Heart right ventricle (tissue), 16 donors: ENCODE measurements at regions of chr20 and their contacts with region 1.

Region 1: GRCh38 chr20:33992923-33993575 is 662 bp upstream of the RALY start:
- DNase-seq: peak; percentile 99 to 100
- ATAC-seq: peak; percentile 91 to 97 (median 96)
- H3K4me3 ChIP-seq: peak overlapping the region; percentile 77 to 98 (median 86)
- H3K27ac ChIP-seq: peak overlapping the region; percentile 95 to 99 (median 98)
- H3K4me1 ChIP-seq: peaks cover 14 to 52% (median 42%) of the 10 kb centered on the region in 9 donors
- H3K27me3 ChIP-seq: no peaks in the 10 kb centered on the region
- CTCF ChIP-seq: no peak

Region 2: GRCh38 chr20:33647603-33648395 is 345.2 kb before region 1 on chr20:
- intact Hi-C with region 1: no loop called
- DNase-seq: no peak
- ATAC-seq: peak; percentile 9 to 66 (median 42)
- H3K4me3 ChIP-seq: no peak overlapping the region
- H3K27ac ChIP-seq: peak overlapping the region in 2 of 10 donors; percentile 12 to 16
- H3K4me1 ChIP-seq: peaks cover 0 to 36% (median 31%) of the 10 kb centered on the region in 9 donors
- H3K27me3 ChIP-seq: no peaks in the 10 kb centered on the region
- CTCF ChIP-seq: no peak

Region 3: DNA sequence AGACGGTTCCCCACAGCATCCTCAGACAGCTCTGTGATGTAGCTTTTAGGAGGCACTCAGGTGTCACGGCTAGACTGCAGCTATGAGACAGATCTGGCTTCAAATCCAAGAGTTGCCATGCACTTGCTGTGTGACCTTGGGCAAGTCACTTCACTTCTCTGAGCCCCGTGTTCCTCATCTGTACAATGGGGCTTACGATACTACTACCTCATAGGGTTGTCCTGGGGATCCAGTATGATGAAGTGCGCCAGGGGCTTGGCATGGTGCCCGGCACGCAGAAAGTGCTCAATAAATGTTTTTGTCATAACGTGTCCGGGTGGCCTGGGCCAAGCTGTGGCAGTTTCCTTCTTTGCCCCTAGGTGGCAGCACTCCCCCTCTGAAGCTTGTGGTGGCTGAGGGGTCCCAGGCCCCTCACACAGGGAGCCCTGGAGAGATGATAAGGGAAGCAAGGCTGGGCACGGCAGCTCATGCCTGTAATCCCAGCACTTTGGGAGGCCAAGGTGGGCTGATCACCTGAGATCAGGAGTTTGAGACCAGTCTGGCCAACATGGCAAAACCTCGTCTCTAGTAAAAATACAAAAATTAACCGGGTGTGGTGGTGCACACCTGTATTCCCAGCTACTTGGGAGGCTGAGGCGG is 201.0 kb before region 1 on chr20:
- intact Hi-C with region 1: loop called in 1 of 10 experiments (anchors 5 kb)
- DNase-seq: peak; percentile 40 to 43
- ATAC-seq: peak in 4 of 8 donors; percentile 25 to 48 (median 34)
- H3K4me3 ChIP-seq: no peak overlapping the region
- H3K27ac ChIP-seq: peak overlapping the region in 6 of 10 donors; percentile 31 to 76 (median 59)
- H3K4me1 ChIP-seq: peaks cover 10 to 57% (median 43%) of the 10 kb centered on the region in 9 donors
- H3K27me3 ChIP-seq: no peaks in the 10 kb centered on the region
- CTCF ChIP-seq: peak; percentile 59 to 85 (median 80)

Region 4: GRCh38 chr20:33875055-33875454 is 118.0 kb before region 1 on chr20:
- intact Hi-C with region 1: no loop called
- DNase-seq: no peak
- ATAC-seq: no peak
- H3K4me3 ChIP-seq: no peak overlapping the region
- H3K27ac ChIP-seq: no peak overlapping the region
- H3K4me1 ChIP-seq: no peaks in the 10 kb centered on the region
- H3K27me3 ChIP-seq: no peaks in the 10 kb centered on the region
- CTCF ChIP-seq: no peak

Region 5: GRCh38 chr20:34037121-34037520 is 44.1 kb after region 1 on chr20:
- intact Hi-C with region 1: loop called in 4 of 10 experiments (anchors 2 to 5 kb)
- DNase-seq: no peak
- ATAC-seq: peak in 7 of 8 donors; percentile 22 to 55 (median 46)
- H3K4me3 ChIP-seq: no peak overlapping the region
- H3K27ac ChIP-seq: peak overlapping the region in 1 of 10 donors; percentile 31
- H3K4me1 ChIP-seq: peaks cover 30 to 72% (median 65%) of the 10 kb centered on the region in 9 donors
- H3K27me3 ChIP-seq: no peaks in the 10 kb centered on the region
- CTCF ChIP-seq: no peak

Region 6: DNA sequence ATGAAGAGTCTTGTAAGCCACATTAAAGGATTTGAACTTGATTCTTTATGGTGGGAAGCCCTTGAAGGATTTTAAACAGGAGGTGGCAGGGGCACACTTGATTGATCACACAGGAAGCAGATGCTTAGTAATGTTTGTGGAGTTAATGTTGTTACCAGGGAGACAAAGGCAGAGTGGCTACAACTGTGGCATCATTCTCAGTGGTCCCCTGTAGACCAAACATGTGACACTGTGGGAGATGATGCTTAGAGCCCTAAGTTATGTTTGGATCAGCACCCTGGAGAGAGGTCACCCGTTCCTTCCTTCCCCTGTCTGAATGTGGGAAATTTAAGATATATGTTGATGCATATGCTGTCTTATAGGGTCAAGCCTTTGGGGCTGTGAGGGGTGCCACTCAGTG is 65.8 kb after region 1 on chr20:
- intact Hi-C with region 1: loop called in 3 of 10 experiments (anchors 5 to 10 kb)
- DNase-seq: no peak
- ATAC-seq: peak in 1 of 8 donors; percentile 22
- H3K4me3 ChIP-seq: no peak overlapping the region
- H3K27ac ChIP-seq: no peak overlapping the region
- H3K4me1 ChIP-seq: peaks cover 6 to 65% (median 22%) of the 10 kb centered on the region in 9 donors
- H3K27me3 ChIP-seq: no peaks in the 10 kb centered on the region
- CTCF ChIP-seq: no peak

Region 7: DNA sequence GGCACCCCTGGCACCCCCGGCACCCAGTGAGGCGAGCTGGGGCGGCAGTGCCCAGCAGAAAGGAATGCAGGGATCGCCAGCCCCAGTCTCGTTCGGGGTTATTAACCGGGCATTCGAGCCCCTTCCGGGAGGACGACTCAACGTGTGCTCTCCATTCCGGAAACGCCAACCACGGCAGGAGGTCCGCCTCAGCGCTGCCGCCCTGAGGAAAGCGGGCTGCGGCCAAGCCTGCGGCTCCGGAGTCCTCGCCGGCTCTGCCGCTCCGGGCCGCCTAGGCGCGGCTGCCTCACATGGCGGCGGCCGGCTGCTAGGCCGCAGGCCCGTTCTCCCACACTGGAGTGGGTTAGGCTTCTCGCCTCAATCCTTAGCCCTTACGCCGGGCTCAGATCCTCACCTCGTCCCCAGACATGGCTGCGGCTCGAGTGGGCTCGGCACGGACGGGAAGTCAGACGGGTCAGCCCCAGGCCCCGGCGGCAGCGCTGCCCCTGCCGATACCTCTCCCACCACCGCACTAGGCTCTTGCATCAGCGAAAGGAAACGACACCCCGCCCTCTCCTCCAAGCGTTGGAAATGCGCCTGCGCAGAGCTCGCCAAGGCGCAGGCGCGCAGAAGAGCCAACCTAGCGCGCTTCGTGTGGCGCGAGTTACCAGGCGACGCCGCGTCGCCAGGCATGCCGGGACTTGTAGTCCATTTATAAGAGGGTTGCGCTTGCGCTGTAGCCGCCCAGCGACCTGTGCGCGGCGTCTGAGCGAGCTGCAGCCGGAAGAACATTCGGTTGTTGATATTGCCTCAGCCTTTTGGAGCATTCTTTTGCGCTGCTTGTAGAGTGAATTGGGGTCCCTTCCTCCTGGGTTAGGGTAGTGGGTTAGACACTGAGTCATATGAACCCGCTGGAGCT is 118.9 kb after region 1 on chr20 and contains the start of gene EIF2S2:
- intact Hi-C with region 1: loop called in 1 of 10 experiments (anchors 5 kb)
- DNase-seq: peak; percentile 94 to 96
- ATAC-seq: peak; percentile 97 to 98 (median 98)
- H3K4me3 ChIP-seq: peak within 1 kb of the TSS; percentile 65 to 95 (median 80)
- H3K27ac ChIP-seq: peak within 1 kb of the TSS; percentile 77 to 98 (median 94)
- H3K4me1 ChIP-seq: peaks cover 4 to 50% (median 42%) of the 10 kb centered on the region in 9 donors
- H3K27me3 ChIP-seq: no peaks in the 10 kb centered on the region
- CTCF ChIP-seq: no peak
- total RNA-seq, gene EIF2S2: 32.4 to 59.7 (median 41.1) TPM

Region 8: DNA sequence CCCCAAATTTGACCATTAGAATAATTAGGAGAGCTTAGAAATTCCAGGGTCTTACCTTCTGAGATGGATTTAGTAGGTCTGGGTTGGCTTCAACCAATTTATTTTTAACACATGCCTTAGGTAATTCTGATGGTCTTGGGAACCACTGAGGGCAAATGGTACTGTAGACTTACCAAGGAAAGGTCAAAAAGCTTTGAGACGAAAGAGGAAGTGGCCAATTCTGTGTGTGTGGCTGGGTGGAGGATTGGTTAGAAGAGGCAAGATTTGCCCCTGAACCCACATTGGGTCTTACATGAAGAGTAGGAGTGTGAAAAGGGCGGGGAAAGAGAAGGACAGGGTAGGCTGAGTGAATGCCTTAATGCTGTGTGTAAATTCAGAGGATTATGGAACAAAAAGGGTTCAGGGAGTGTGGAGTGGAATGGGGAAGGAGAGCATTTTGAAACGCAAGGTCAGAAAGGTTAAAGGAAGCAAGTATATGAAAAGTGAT is 372.8 kb after region 1 on chr20:
- intact Hi-C with region 1: no loop called
- DNase-seq: no peak
- ATAC-seq: no peak
- H3K4me3 ChIP-seq: peak overlapping the region in 1 of 10 donors; percentile 9
- H3K27ac ChIP-seq: peak overlapping the region in 3 of 10 donors; percentile 19 to 54 (median 43)
- H3K4me1 ChIP-seq: peaks cover 3 to 54% (median 40%) of the 10 kb centered on the region in 9 donors
- H3K27me3 ChIP-seq: no peaks in the 10 kb centered on the region
- CTCF ChIP-seq: no peak